Psoas muscle (tissue), 8 donors: ENCODE measurements at regions of chr12 and their contacts with region 1.

Region 1: GRCh38 chr12:124053851-124054250 is 80.8 kb downstream of the ZNF664 start:
- DNase-seq: peak; percentile 24 to 65
- ATAC-seq: peak; percentile 80 to 93 (median 91)
- H3K4me3 ChIP-seq: no peak overlapping the region
- H3K27ac ChIP-seq: no peak overlapping the region
- H3K4me1 ChIP-seq: no peaks in the 10 kb centered on the region
- H3K27me3 ChIP-seq: peaks cover 0 to 2% (median 0%) of the 10 kb centered on the region in 3 donors
- CTCF ChIP-seq: peak; percentile 71

Region 2: DNA sequence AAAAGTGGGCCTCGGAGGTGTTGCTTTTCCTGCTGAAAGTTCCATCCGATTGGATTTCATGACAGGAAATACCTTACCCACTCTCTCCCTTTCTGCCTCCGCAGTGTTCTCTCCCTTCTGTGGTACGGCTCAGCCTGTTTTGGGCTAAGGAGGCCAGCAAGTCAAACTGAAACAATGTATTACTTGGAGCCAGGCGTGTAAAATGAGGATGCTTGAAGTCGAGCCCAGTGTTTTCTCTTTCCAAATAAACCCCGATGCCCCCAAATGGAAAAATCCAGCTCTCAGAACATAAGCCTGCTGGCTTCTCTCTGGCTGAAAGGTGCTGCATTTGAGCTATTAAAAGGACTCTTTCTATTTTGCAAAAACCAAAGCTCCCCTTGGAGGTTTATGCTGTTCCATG is 43.9 kb after region 1 on chr12:
- intact Hi-C with region 1: no loop called
- DNase-seq: no peak
- ATAC-seq: no peak
- H3K4me3 ChIP-seq: no peak overlapping the region
- H3K27ac ChIP-seq: no peak overlapping the region
- H3K4me1 ChIP-seq: no peaks in the 10 kb centered on the region
- H3K27me3 ChIP-seq: peaks cover 0 to 5% (median 5%) of the 10 kb centered on the region in 3 donors
- CTCF ChIP-seq: no peak

Region 3: GRCh38 chr12:124302807-124303578 is 249.1 kb after region 1 on chr12:
- intact Hi-C with region 1: loop called in 1 of 2 experiments (anchors 5 kb)
- DNase-seq: peak in 1 of 2 donors; percentile 39
- ATAC-seq: no peak
- H3K4me3 ChIP-seq: no peak overlapping the region
- H3K27ac ChIP-seq: no peak overlapping the region
- H3K4me1 ChIP-seq: no peaks in the 10 kb centered on the region
- H3K27me3 ChIP-seq: no peaks in the 10 kb centered on the region
- CTCF ChIP-seq: no peak

Region 4: DNA sequence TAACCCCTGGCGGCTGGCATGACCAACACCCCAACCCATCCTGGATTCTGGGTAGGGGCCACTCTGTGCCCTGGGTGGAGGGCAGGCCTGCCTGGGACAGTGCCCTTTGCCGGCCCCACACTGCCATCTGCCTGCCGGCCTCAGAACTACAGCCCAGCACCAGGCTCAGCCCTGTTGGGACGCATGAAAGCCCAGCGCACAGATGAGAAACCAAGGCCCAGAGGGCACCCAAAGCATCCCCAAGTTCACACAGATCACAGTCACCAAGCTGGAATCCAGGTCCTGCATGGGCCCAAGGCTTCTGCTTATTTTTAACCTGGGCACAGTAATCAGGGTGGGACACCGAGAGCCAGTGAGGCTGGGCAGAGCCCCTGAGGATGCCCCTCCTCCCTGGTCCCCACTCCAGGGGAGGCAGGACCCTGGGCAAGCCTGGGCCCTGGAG is 267.2 kb after region 1 on chr12:
- intact Hi-C with region 1: loop called (anchors 1 to 5 kb)
- DNase-seq: peak; percentile 63 to 85
- ATAC-seq: peak; percentile 77 to 86 (median 82)
- H3K4me3 ChIP-seq: no peak overlapping the region
- H3K27ac ChIP-seq: no peak overlapping the region
- H3K4me1 ChIP-seq: no peaks in the 10 kb centered on the region
- H3K27me3 ChIP-seq: no peaks in the 10 kb centered on the region
- CTCF ChIP-seq: peak; percentile 91